Activated CD4-positive, alpha-beta T cell treated with anti-CD3 and anti-CD28 coated beads for 36 hours (primary cell): ENCODE measurements at regions of chr2 and their contacts with region 1.

Region 1: DNA sequence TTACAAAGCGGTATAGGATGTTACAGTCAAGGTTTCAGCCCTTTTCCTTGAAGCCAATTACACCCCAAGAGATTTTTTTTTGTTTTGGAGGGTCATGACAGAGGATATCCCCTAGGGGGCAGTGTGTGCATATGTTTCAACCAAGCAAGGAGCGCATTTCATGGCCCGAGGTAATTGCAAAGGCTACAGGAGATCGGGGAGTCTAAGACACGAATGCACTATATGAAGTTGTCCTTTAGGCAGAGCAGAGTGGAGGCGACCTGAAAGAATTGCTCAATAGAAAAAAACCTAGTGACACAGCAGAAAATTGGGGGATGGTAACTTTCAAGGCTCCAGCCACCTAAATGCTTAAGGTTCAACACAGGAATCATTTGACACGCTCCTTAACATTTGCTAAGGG is 219.8 kb upstream of the PARD3B start:
- DNase-seq: peak; percentile 68
- ATAC-seq: peak; percentile 81
- H3K4me3 Mint-ChIP-seq: no peak overlapping the region
- H3K27ac Mint-ChIP-seq: no peak overlapping the region
- H3K4me1 Mint-ChIP-seq: no peaks in the 10 kb centered on the region
- H3K27me3 Mint-ChIP-seq: peaks cover 10% of the 10 kb centered on the region

Region 2: DNA sequence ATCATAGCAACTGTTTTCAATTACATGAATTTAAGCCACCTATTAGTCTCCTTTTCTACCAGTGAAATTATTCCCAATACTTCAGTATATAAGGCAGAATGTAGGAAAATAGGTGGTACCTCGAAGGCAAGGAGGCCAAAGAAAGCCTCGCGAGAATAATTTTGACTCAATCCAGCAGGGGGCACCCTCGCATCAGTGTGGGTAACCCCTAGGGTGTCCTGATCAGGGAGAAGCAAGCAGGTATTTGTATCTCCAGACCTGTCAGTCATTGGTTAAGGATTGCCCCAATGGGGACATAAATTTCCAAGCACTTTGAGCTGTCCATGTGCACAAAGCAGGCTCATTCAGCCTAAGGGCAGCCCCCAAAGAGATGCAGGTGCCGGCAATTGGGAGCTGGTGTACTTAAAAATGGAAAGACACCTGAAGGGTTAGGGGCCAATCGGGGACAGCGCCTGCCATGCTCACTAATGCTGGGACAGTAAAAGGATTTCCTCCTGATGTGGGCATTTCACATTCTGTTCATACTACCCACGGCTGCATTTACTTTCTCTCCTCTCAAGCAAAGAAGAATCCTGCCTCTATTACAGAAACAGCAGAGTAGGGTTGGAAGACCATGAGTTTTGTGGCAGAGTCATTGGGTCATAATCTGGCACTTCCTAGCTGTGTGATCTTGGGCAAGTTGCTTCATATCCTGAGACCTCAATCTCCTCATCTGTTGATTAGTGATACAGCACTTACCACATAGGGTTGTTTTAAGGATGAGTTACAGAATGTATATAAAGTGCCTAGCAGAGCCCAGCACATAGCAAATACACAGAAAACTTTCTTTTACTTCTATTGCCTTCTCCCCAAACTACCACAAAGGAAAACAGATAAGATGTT is 252.8 kb before region 1 on chr2:
- CTCF ChIA-PET with region 1: interaction called, 4 read pairs
- POLR2A ChIA-PET with region 1: no interaction called
- intact Hi-C with region 1: loop called in 1 of 2 experiments (anchors 5 kb)
- DNase-seq: peak; percentile 88
- ATAC-seq: peak; percentile 89
- H3K4me3 Mint-ChIP-seq: no peak overlapping the region
- H3K27ac Mint-ChIP-seq: no peak overlapping the region
- H3K4me1 Mint-ChIP-seq: peaks cover 7% of the 10 kb centered on the region
- H3K27me3 Mint-ChIP-seq: peaks cover 5% of the 10 kb centered on the region

Region 3: DNA sequence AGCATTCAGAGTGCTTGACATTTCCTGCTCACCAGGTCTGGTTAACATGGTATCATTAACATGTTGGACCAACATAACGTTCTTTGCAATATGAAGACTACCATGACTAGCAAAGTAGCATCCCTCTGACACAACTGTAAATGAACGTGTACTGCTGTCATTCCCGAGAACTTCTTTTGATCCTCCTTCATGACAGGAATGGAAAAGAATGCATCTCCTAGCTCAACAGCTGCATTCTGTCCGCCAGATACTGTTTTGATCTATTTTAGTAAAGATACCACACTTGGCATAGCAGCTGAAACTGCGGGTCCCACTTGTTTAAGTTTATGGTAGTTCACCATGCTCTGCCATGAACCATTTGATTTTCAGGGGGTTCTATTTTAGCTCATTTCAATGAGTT is 75.6 kb after region 1 on chr2:
- CTCF ChIA-PET with region 1: no interaction called
- POLR2A ChIA-PET with region 1: no interaction called
- intact Hi-C with region 1: no loop called
- DNase-seq: no peak
- ATAC-seq: no peak
- H3K4me3 Mint-ChIP-seq: no peak overlapping the region
- H3K27ac Mint-ChIP-seq: no peak overlapping the region
- H3K4me1 Mint-ChIP-seq: no peaks in the 10 kb centered on the region
- H3K27me3 Mint-ChIP-seq: peaks cover 4% of the 10 kb centered on the region

Region 4: GRCh38 chr2:204871231-204871953 is 545.9 kb after region 1 on chr2:
- CTCF ChIA-PET with region 1: no interaction called
- POLR2A ChIA-PET with region 1: no interaction called
- intact Hi-C with region 1: loop called in 1 of 2 experiments (anchors 10 kb)
- DNase-seq: no peak
- ATAC-seq: peak; percentile 64
- H3K4me3 Mint-ChIP-seq: no peak overlapping the region
- H3K27ac Mint-ChIP-seq: no peak overlapping the region
- H3K4me1 Mint-ChIP-seq: peaks cover 28% of the 10 kb centered on the region
- H3K27me3 Mint-ChIP-seq: no peaks in the 10 kb centered on the region

Region 5: GRCh38 chr2:205808486-205809121 is 1483.1 kb after region 1 on chr2:
- CTCF ChIA-PET with region 1: no interaction called
- POLR2A ChIA-PET with region 1: no interaction called
- intact Hi-C with region 1: loop called in 1 of 2 experiments (anchors 2 kb)
- DNase-seq: no peak
- ATAC-seq: no peak
- H3K4me3 Mint-ChIP-seq: no peak overlapping the region
- H3K27ac Mint-ChIP-seq: no peak overlapping the region
- H3K4me1 Mint-ChIP-seq: no peaks in the 10 kb centered on the region
- H3K27me3 Mint-ChIP-seq: peaks cover 2% of the 10 kb centered on the region

Region 6: DNA sequence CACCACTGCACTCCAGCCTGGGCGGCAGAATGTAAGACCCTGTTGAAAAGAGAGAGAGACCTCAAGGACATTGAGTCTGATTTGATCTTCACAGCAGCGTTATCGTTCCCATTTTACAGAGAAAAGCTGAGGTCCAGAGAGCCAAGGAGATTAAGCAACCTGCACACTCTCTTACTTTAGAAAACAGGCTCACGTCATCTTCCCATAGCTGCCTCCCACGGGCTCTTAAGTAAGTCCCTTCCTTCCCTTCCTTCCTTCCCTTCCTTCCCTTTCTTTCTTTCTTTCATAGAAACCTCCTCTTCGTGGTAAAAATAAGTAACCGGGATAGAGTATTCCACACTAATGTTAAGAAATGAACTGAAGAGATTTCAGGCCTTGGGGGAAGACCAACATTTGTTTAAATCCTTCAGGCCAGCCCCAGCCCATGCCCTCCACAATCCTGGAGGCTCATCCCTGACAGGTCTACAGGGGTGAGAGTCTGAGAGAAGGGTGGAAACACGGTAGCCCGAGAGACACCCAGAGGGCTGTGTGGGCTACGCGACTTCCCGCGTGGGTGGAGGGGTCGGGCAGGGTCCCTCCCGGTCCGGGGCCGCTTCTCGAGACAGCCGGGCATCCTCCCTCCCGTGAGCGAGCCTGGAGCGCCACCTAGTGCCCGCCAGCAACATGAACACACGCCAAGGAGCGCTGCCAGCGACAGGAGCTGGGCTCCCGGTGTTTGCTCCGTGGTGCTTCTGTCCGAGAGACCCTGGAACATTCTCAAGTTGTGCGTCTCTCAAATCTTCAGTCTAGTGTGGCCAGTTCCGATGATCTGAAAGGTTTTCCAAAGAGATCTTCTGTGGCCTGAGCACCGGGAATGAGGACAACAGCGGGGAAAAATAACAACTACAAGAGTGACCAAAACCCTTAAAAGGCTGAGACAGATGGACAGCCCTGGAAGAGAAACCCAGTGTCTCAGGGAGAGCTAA is 1600.2 kb after region 1 on chr2:
- CTCF ChIA-PET with region 1: interaction called, 4 read pairs
- POLR2A ChIA-PET with region 1: no interaction called
- intact Hi-C with region 1: loop called in 1 of 2 experiments (anchors 1 kb)
- DNase-seq: peak; percentile 88
- ATAC-seq: peak; percentile 98
- H3K4me3 Mint-ChIP-seq: no peak overlapping the region
- H3K27ac Mint-ChIP-seq: no peak overlapping the region
- H3K4me1 Mint-ChIP-seq: peaks cover 7% of the 10 kb centered on the region
- H3K27me3 Mint-ChIP-seq: peaks cover 45% of the 10 kb centered on the region